ENCODE measurements at regions of chr14 and their contacts with region 1.

Region 1: DNA sequence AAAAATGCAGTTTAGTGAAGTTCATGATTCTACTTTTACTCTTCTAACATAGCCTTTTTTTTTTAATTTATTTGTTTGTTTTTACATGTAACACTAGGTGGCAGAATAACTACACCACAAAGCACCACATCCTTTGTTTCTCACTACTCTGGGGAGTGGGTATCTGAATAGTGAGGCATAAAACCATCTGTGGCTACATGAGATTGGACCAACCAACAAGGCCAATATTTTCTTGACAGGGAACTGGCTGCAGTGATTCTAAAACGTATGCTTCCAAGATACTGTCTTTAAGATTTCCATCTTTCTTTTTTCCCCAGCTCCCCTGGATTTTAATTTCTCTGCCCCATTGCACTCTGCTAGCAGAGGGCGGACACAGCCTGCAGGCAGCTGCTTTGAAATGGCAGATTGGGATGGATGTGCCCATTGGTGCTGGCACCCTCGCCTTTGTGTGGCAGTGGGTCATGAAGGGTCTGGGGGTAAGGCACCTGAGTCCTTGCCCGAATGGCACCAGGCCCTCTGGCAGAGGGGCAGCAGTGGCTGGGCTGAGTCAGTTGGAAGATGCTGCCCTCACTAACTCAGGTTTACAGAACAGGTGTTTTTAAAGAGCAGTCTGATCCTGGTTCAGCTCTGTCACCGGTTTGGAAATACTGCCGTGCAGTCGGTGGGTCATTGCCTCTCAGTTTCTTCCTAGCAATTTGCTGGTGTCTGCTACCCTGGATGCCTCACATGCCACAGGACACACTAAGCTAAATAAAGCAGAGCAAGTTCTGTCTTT is 429.1 kb downstream of the RAD51B start:
- DNase-seq: peak in 3 of 9 experiments; percentile 52 to 79 (median 64)
- ATAC-seq: peak; percentile 79
- H3K4me3 ChIP-seq: no peak overlapping the region
- H3K4me3 Mint-ChIP-seq: no peak overlapping the region
- H3K27ac ChIP-seq: no peak overlapping the region
- H3K27ac Mint-ChIP-seq: peak overlapping the region; percentile 47
- H3K4me1 ChIP-seq: peaks cover 15% of the 10 kb centered on the region
- H3K4me1 Mint-ChIP-seq: peaks cover 30% of the 10 kb centered on the region
- H3K27me3 ChIP-seq: no peaks in the 10 kb centered on the region
- H3K27me3 Mint-ChIP-seq: no peaks in the 10 kb centered on the region
- CTCF ChIP-seq: peak; percentile 67

Region 2: GRCh38 chr14:67943947-67944346 is 304.7 kb before region 1 on chr14:
- CTCF ChIA-PET with region 1: no interaction called
- POLR2A ChIA-PET with region 1: no interaction called
- intact Hi-C with region 1: loop called (anchors 2 to 5 kb)
- DNase-seq: peak in 7 of 9 experiments; percentile 3 to 77 (median 49)
- ATAC-seq: peak; percentile 69
- H3K4me3 ChIP-seq: no peak overlapping the region
- H3K4me3 Mint-ChIP-seq: no peak overlapping the region
- H3K27ac ChIP-seq: no peak overlapping the region
- H3K27ac Mint-ChIP-seq: no peak overlapping the region
- H3K4me1 ChIP-seq: no peaks in the 10 kb centered on the region
- H3K4me1 Mint-ChIP-seq: no peaks in the 10 kb centered on the region
- H3K27me3 ChIP-seq: no peaks in the 10 kb centered on the region
- H3K27me3 Mint-ChIP-seq: no peaks in the 10 kb centered on the region
- CTCF ChIP-seq: peak; percentile 80

Region 3: DNA sequence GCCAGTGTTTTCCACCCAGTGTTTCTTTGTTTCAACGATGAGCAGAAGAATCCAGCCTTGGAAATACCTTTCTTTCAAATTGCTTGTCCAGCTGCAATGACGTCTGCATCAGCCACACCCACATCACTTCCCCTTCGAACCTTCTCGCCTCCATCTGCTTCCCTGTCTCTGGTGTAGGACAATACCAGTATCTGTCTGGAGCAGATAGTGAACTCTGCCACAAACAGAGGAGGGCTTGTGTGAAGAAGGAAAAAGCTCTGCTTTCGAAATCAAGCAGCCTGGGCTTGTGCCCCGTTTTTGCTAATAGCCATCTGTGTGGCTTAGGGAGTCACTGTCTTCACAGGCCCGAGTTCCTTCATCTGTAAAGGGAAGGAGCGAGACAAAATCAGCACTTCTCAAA is 128.8 kb after region 1 on chr14:
- CTCF ChIA-PET with region 1: interaction called, 19 read pairs
- POLR2A ChIA-PET with region 1: interaction called, 3 read pairs
- intact Hi-C with region 1: no loop called
- DNase-seq: peak in 2 of 9 experiments; percentile 6 to 45
- ATAC-seq: no peak
- H3K4me3 ChIP-seq: no peak overlapping the region
- H3K4me3 Mint-ChIP-seq: no peak overlapping the region
- H3K27ac ChIP-seq: peak overlapping the region in 1 of 2 experiments; percentile 32
- H3K27ac Mint-ChIP-seq: peak overlapping the region; percentile 74
- H3K4me1 ChIP-seq: peaks cover 61% of the 10 kb centered on the region
- H3K4me1 Mint-ChIP-seq: peaks cover 68% of the 10 kb centered on the region
- H3K27me3 ChIP-seq: no peaks in the 10 kb centered on the region
- H3K27me3 Mint-ChIP-seq: no peaks in the 10 kb centered on the region
- CTCF ChIP-seq: no peak

Region 4: GRCh38 chr14:68506021-68506644 is 257.5 kb after region 1 on chr14:
- CTCF ChIA-PET with region 1: interaction called, 13 read pairs
- POLR2A ChIA-PET with region 1: interaction called, 3 read pairs
- intact Hi-C with region 1: no loop called
- DNase-seq: peak in 1 of 9 experiments; percentile 25
- ATAC-seq: no peak
- H3K4me3 ChIP-seq: no peak overlapping the region
- H3K4me3 Mint-ChIP-seq: peak overlapping the region; percentile 64
- H3K27ac ChIP-seq: peak overlapping the region; percentile 49 to 52
- H3K27ac Mint-ChIP-seq: peak overlapping the region; percentile 91
- H3K4me1 ChIP-seq: peaks cover 64% of the 10 kb centered on the region
- H3K4me1 Mint-ChIP-seq: peaks cover 73% of the 10 kb centered on the region
- H3K27me3 ChIP-seq: no peaks in the 10 kb centered on the region
- H3K27me3 Mint-ChIP-seq: no peaks in the 10 kb centered on the region
- CTCF ChIP-seq: no peak

Region 5: GRCh38 chr14:68788996-68789820 is 540.5 kb after region 1 on chr14:
- CTCF ChIA-PET with region 1: interaction called, 195 read pairs
- POLR2A ChIA-PET with region 1: interaction called, 54 read pairs
- intact Hi-C with region 1: loop called (anchors 1 kb)
- DNase-seq: peak; percentile 75 to 94 (median 90)
- ATAC-seq: peak; percentile 36
- H3K4me3 ChIP-seq: peak overlapping the region; percentile 94 to 97
- H3K4me3 Mint-ChIP-seq: peak overlapping the region; percentile 92
- H3K27ac ChIP-seq: peak overlapping the region; percentile 99 to 100
- H3K27ac Mint-ChIP-seq: peak overlapping the region; percentile 100
- H3K4me1 ChIP-seq: peaks cover 53% of the 10 kb centered on the region
- H3K4me1 Mint-ChIP-seq: peaks cover 58% of the 10 kb centered on the region
- H3K27me3 ChIP-seq: no peaks in the 10 kb centered on the region
- H3K27me3 Mint-ChIP-seq: no peaks in the 10 kb centered on the region
- CTCF ChIP-seq: peak; percentile 84

Region 6: GRCh38 chr14:68824517-68825347 is 576.1 kb after region 1 on chr14:
- CTCF ChIA-PET with region 1: interaction called, 262 read pairs
- POLR2A ChIA-PET with region 1: interaction called, 3 read pairs
- intact Hi-C with region 1: no loop called
- DNase-seq: peak in 3 of 9 experiments; percentile 43 to 55 (median 48)
- ATAC-seq: no peak
- H3K4me3 ChIP-seq: no peak overlapping the region
- H3K4me3 Mint-ChIP-seq: no peak overlapping the region
- H3K27ac ChIP-seq: no peak overlapping the region
- H3K27ac Mint-ChIP-seq: no peak overlapping the region
- H3K4me1 ChIP-seq: peaks cover 23% of the 10 kb centered on the region
- H3K4me1 Mint-ChIP-seq: peaks cover 33% of the 10 kb centered on the region
- H3K27me3 ChIP-seq: no peaks in the 10 kb centered on the region
- H3K27me3 Mint-ChIP-seq: no peaks in the 10 kb centered on the region
- CTCF ChIP-seq: peak; percentile 52